ENCODE measurements at regions of chr1 and their contacts with region 1.

Region 1: DNA sequence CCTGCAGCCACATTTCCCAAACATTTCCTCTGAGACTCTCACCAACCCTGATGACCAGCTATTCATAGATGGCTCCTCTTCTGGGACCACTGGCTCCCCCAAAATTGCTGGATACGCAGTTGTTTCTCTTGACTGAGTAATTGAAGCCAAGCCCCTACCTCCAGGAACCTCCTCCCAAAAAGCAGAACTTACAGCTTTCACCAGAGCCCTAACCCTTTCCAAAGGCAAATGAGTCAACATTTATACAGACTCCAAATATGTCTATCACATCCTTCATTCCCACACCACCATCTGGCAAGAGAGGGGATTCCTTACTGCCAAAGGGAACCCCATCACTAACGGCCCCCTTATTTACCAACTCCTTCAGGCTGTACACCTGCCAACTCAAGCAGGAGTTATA is 20.3 kb upstream of the CA6 start:
- DNase-seq: no peak
- ATAC-seq: no peak
- H3K4me3 ChIP-seq: no peak overlapping the region
- H3K27ac ChIP-seq: no peak overlapping the region
- H3K4me1 ChIP-seq: no peaks in the 10 kb centered on the region
- H3K27me3 ChIP-seq: no peaks in the 10 kb centered on the region
- CTCF ChIP-seq: no peak

Region 2: DNA sequence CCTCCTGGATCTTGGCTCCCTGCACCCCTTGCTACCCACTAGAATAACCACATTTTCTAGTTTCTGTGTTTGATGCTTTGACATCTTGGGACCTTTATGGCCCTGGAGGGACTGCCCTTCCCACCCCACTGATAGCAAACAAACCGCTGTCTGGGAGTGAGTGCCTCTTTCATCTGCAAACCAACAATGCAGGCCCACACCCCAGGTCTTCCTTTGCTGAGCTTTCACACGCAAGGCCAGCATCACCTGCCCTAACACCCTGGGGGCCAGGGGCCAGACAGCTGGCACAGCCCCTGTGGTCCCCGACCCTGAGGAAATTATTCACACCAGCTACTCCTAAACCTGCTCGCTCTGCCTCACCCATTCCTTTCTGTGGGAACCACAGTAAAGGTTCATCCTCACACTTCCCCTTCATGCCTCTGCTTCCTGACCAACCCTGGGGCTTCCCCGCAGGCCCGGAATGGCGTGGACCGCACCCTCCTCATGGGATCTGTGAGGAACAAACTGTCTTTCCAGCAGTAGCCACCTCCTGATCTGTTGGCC is 85.4 kb after region 1 on chr1:
- CTCF ChIA-PET with region 1: interaction called, 12 read pairs
- POLR2A ChIA-PET with region 1: no interaction called
- in situ Hi-C with region 1: no loop called
- intact Hi-C with region 1: no loop called
- DNase-seq: no peak
- ATAC-seq: no peak
- H3K4me3 ChIP-seq: no peak overlapping the region
- H3K27ac ChIP-seq: no peak overlapping the region
- H3K4me1 ChIP-seq: no peaks in the 10 kb centered on the region
- H3K27me3 ChIP-seq: no peaks in the 10 kb centered on the region
- CTCF ChIP-seq: no peak

Region 3: DNA sequence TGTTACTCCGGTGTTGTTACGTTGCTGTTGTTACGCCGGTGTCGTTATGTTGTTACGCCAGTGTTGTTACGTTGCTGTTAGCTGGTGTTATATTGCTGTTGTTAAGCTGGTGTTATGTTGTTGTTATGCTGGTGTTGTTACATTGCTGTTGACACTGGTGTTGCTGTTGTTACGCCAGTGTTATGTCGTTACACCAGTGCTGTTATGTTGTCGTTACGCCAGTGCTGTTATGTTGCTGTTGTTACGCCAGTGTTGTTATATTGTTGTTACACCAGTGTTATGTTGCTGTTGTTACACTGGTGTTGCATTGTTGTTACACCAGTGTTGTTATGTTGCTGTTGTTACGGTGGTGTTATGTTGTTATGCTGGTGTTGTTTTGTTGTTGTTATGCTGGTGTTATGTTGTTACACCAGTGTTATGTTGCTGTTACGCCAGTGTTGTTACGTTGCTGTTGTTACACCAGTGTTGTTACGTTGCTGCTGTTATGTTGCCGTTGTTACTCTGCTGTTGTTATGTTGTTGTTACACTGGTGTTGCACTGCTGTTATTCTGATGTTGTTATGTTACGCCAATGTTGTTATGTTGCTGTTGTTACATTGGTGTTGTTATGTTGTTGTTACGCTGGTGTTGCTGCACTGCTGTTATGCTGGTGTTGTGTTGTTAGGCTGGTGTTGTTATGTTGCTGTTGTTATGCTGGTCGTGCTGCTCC is 334.8 kb after region 1 on chr1:
- CTCF ChIA-PET with region 1: no interaction called
- POLR2A ChIA-PET with region 1: no interaction called
- in situ Hi-C with region 1: no loop called
- intact Hi-C with region 1: no loop called
- DNase-seq: no peak
- ATAC-seq: no peak
- H3K4me3 ChIP-seq: no peak overlapping the region
- H3K27ac ChIP-seq: no peak overlapping the region
- H3K4me1 ChIP-seq: no peaks in the 10 kb centered on the region
- H3K27me3 ChIP-seq: no peaks in the 10 kb centered on the region
- CTCF ChIP-seq: no peak

Measured in Panc1 (cell line).